ENCODE measurements at regions of chr5 and their contacts with region 1.

Region 1: DNA sequence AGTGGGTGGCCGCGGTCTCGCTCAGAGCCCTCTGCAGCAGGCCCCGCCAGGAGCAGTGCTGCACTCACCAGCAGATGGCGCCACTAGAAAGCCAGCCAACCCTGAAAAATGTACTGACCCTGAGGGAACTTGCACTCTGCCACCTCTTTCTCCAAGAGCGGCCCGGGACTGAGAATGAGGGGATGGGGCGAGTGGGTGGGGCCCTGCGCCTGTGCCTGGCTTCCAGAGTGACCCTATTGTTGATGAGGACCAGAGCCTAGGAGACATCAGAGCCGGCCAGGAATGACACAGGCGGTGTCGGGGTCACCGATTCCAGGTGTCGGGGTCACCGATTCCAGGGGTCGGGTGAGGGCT is 2.9 kb upstream of the IL17B start:
- DNase-seq: peak; percentile 79 to 92
- H3K4me3 ChIP-seq: peak overlapping the region; percentile 38 to 40
- H3K27ac ChIP-seq: peak overlapping the region; percentile 93
- H3K4me1 ChIP-seq: peaks cover 0 to 90% (median 81%) of the 10 kb centered on the region in 4 donors
- H3K27me3 ChIP-seq: no peaks in the 10 kb centered on the region
- CTCF ChIP-seq: peak; percentile 94 to 95

Region 2: DNA sequence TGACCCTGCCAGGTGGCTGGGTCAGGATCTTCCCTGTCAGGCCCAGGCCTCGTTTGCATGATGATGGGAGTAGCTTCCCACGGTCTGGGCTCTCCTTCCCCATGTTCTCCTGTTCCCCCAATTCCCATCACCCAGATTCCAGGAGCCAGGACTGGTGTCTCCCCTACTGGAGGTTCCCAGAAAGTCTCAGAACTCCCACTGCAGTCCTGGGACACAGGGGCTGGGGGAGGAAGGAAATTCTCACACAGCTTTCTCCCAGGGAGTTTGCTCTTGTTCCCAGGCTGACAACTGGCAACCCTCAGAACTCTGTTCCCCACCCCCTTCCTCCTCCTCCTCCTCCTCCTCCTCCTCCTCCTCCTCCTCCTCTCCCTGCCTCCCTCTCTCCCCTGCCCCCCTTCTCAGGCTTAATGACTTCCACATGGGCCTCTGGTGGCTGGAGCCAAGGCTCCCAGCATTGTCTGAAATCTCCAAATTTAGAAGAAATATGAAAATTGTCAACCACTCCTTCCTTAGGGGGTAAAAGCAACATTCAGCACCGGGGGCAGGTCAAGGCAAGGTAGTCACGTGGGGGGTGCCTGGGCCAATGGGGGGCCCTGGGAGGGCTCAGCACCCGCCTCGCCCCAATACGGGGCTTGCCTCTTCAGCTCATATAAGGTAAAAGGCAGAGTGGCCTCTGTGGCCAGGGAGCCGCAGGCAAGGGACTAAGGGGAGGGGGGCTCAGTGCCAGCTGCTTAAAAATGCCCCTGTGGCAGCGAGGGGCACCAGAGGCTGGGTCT is 24.4 kb after region 1 on chr5:
- intact Hi-C with region 1: loop called (anchors 2 kb)
- DNase-seq: peak; percentile 88 to 98
- H3K4me3 ChIP-seq: peak overlapping the region; percentile 66 to 94
- H3K27ac ChIP-seq: peak overlapping the region; percentile 90 to 98
- H3K4me1 ChIP-seq: peaks cover 0 to 46% (median 33%) of the 10 kb centered on the region in 4 donors
- H3K27me3 ChIP-seq: no peaks in the 10 kb centered on the region
- CTCF ChIP-seq: peak in 1 of 2 experiments; percentile 15

Region 3: DNA sequence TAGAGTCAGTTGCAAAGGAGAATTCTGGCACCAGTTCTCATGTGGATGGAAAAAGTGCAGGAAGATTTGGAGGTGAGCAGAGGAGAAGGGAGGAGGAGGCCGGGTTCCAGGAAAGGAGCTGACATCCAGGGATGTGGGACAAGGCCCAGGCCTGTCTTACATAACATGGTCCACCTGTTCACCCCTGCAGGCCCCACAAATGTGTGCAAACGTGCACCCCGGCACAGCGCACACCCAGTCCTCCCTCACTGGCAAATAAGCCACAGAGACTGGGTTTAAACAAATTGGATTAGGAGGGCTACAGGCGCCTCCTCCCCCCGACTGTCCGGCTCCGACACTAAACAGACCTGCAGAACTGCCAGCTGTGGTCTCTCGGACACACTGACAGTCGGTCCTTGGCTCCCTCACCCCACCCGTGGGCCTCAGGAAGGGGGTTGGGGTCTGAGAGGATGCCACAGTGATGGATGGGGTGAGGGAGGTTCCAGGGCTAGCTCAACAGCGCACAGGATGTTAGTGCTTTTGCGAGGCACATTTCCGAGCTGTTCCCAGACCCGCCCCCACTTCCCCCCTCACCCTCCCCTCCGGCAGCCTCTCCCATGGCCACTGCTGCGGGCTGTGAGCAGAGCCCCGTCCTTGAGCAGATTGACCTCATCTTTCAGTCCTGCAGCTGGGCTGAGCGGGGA is 40.5 kb after region 1 on chr5:
- intact Hi-C with region 1: loop called (anchors 5 kb)
- DNase-seq: peak in 1 of 2 donors; percentile 81
- H3K4me3 ChIP-seq: peak overlapping the region; percentile 1 to 66
- H3K27ac ChIP-seq: peak overlapping the region; percentile 90 to 98
- H3K4me1 ChIP-seq: peaks cover 5 to 77% (median 67%) of the 10 kb centered on the region in 4 donors
- H3K27me3 ChIP-seq: no peaks in the 10 kb centered on the region
- CTCF ChIP-seq: no peak

Region 4: DNA sequence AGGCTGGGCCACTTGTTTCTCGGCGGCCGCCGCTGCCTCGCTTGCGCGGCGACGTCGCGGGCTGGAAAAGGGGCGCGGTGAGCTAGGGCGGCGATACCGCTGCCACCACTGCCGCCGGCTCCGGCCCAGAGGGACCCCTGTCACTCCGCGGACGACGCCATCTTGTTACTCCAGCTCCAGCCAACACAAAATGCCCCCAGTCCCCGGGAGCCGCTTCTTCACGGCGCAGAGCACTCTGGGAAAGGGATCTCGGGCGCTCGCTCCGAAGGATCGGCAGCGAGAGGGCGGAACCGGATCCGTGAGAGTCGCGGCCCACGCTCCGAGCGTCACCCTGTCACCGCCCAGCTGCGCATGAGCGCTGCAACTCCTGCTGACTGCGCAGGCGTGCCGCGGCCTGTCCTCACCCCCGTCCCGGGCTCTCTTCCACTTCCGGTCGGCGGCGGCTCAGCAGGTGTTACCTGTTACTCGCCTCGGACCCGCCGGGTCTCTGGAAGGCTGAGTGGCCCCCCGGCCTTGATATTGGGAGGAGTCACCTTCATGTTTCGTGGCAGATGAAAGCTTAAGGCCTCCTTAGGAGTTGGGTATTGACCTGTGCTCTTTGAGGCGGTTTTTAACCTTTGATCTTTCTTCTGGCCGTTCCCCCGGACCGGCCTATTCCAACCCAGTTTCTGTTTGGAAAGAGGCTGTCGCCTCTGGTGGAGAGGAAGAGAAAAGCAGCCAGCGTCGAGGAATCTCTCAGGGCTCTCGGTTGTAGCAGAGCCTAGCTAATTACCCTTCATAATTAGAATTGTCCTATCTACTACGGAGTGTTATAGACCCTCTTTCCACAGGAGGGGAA is 169.5 kb after region 1 on chr5 and contains the start of gene CSNK1A1:
- intact Hi-C with region 1: no loop called
- DNase-seq: peak; percentile 97 to 99
- H3K4me3 ChIP-seq: peak within 1 kb of the TSS; percentile 92 to 96
- H3K27ac ChIP-seq: peak within 1 kb of the TSS; percentile 97 to 99
- H3K4me1 ChIP-seq: peaks cover 0 to 38% (median 18%) of the 10 kb centered on the region in 4 donors
- H3K27me3 ChIP-seq: no peaks in the 10 kb centered on the region
- CTCF ChIP-seq: peak; percentile 85 to 89

Region 5: GRCh38 chr5:149636851-149637246 is 254.9 kb after region 1 on chr5:
- intact Hi-C with region 1: no loop called
- DNase-seq: peak; percentile 58 to 84
- H3K4me3 ChIP-seq: no peak overlapping the region
- H3K27ac ChIP-seq: no peak overlapping the region
- H3K4me1 ChIP-seq: peaks cover 0 to 8% (median 3%) of the 10 kb centered on the region in 4 donors
- H3K27me3 ChIP-seq: no peaks in the 10 kb centered on the region
- CTCF ChIP-seq: peak; percentile 83 to 90

Measured in tibial artery (tissue), 4 donors.